MCF 10A (cell line): ENCODE measurements at regions of chr3 and their contacts with region 1.

Region 1: DNA sequence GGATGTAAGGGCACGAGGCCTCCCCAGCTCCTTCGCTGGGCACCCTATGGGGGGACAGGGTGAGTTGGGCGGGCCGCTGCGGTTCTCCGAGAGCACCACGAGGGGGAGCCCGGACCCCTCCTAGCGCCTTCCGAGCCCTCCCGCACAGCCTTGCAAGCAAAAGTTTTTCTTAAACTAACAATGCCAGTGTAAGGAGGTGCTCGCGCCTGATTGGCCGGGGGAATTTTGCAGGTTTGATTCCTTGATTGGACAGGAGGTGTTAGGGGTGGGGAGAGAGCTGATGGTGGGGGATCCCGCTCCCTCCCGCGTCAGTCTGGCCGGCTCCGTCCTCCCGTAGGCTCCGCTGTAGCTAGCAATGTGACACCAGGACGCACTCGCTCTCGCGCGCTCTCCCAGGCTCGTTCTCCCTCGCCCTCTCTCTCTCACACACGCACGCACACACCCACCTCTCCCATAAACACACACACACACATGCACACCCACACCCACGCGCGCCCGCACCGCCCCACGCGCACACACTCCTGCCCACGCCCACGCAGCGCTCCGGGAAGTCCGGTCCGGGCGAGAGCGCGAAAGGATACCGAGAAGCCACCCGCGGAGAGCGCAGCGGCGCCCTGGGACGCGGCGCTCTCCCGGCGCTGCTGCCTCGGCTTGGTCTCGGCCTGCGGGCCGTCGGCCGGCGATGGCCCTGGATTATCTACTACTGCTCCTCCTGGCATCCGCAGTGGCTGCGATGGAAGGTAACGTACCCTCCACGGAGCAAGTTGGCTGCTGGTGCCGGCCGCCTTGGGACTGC is at the start of gene EPHB1:
- DNase-seq: peak; percentile 69
- H3K4me3 Mint-ChIP-seq: peak within 1 kb of the TSS; percentile 69
- H3K27ac Mint-ChIP-seq: no peak within 1 kb of the TSS
- H3K4me1 Mint-ChIP-seq: peaks cover 5% of the 10 kb centered on the region
- H3K27me3 Mint-ChIP-seq: peaks cover 48% of the 10 kb centered on the region
- CTCF ChIP-seq: peak; percentile 90
- total RNA-seq, gene EPHB1: not detected in 2 replicates

Region 2: GRCh38 chr3:135503760-135504686 is 708.9 kb after region 1 on chr3:
- CTCF ChIA-PET with region 1: interaction called, 17 read pairs
- POLR2A ChIA-PET with region 1: no interaction called
- intact Hi-C with region 1: loop called (anchors 2 kb)
- DNase-seq: peak; percentile 69
- H3K4me3 Mint-ChIP-seq: no peak overlapping the region
- H3K27ac Mint-ChIP-seq: no peak overlapping the region
- H3K4me1 Mint-ChIP-seq: peaks cover 5% of the 10 kb centered on the region
- H3K27me3 Mint-ChIP-seq: peaks cover 41% of the 10 kb centered on the region
- CTCF ChIP-seq: peak; percentile 62